ENCODE measurements at regions of chr9 and their contacts with region 1.

Region 1: GRCh38 chr9:128757602-128758001 is 14.1 kb downstream of the ZER1 start:
- DNase-seq: no peak
- ATAC-seq: no peak
- H3K4me3 ChIP-seq: no peak overlapping the region
- H3K27ac ChIP-seq: no peak overlapping the region
- H3K4me1 ChIP-seq: no peaks in the 10 kb centered on the region
- H3K27me3 ChIP-seq: no peaks in the 10 kb centered on the region
- CTCF ChIP-seq: no peak
- EP300 ChIP-seq: no peak
- POLR2A ChIP-seq: no peak
- RAD21 ChIP-seq: no peak

Region 2: GRCh38 chr9:128296337-128297220 is 461.0 kb before region 1 on chr9:
- CTCF ChIA-PET with region 1: no interaction called
- POLR2A ChIA-PET with region 1: no interaction called
- RAD21 ChIA-PET with region 1: no interaction called
- SMC1A ChIA-PET with region 1: no interaction called
- in situ Hi-C with region 1: no loop called
- intact Hi-C with region 1: no loop called
- DNase-seq: no peak
- ATAC-seq: no peak
- H3K4me3 ChIP-seq: no peak overlapping the region
- H3K27ac ChIP-seq: no peak overlapping the region
- H3K4me1 ChIP-seq: no peaks in the 10 kb centered on the region
- H3K27me3 ChIP-seq: no peaks in the 10 kb centered on the region
- CTCF ChIP-seq: no peak
- EP300 ChIP-seq: no peak
- POLR2A ChIP-seq: no peak
- RAD21 ChIP-seq: no peak

Region 3: GRCh38 chr9:128723866-128724743 is 33.5 kb before region 1 on chr9 and contains the start of gene ZDHHC12:
- CTCF ChIA-PET with region 1: no interaction called
- POLR2A ChIA-PET with region 1: no interaction called
- RAD21 ChIA-PET with region 1: no interaction called
- SMC1A ChIA-PET with region 1: no interaction called
- in situ Hi-C with region 1: no loop called
- intact Hi-C with region 1: no loop called
- DNase-seq: peak; percentile 92
- ATAC-seq: peak; percentile 99
- H3K4me3 ChIP-seq: peak within 1 kb of the TSS; percentile 100
- H3K27ac ChIP-seq: peak within 1 kb of the TSS; percentile 63
- H3K4me1 ChIP-seq: peaks cover 5% of the 10 kb centered on the region
- H3K27me3 ChIP-seq: no peaks in the 10 kb centered on the region
- CTCF ChIP-seq: no peak
- EP300 ChIP-seq: no peak
- POLR2A ChIP-seq: peak; percentile 99
- RAD21 ChIP-seq: no peak
- polyA plus RNA-seq, gene ZDHHC12: 0.95 to 9.9 TPM

Region 4: DNA sequence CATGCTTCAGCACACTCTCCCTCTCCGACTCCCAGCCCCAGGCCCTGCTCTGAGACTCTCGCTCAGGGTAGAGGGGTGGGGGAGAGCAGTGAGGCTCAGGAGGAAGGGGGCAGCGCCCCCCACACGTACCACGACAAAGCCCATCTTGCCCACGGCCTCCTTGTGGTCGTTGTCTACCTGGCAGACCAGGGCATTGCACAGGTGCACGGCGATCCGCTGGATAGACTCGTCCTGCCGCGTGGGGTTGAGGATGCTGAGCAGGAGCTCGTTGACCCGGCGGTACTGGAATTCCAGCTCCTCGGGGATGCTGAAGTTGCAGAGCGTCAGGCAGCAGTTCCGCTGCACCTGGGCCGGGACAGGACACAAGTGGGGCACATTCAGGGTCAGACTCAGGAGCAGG is 15.2 kb before region 1 on chr9:
- CTCF ChIA-PET with region 1: interaction called, 4 read pairs
- POLR2A ChIA-PET with region 1: interaction called, 10 read pairs
- RAD21 ChIA-PET with region 1: interaction called, 3 read pairs
- SMC1A ChIA-PET with region 1: no interaction called
- in situ Hi-C with region 1: no loop called
- intact Hi-C with region 1: no loop called
- DNase-seq: no peak
- ATAC-seq: no peak
- H3K4me3 ChIP-seq: no peak overlapping the region
- H3K27ac ChIP-seq: no peak overlapping the region
- H3K4me1 ChIP-seq: no peaks in the 10 kb centered on the region
- H3K27me3 ChIP-seq: no peaks in the 10 kb centered on the region
- CTCF ChIP-seq: no peak
- EP300 ChIP-seq: no peak
- POLR2A ChIP-seq: 0 out of 2 replicates have a peak, but pooled peaks have one; percentile 12
- RAD21 ChIP-seq: no peak

Region 5: GRCh38 chr9:128809832-128810231 is 52.2 kb after region 1 on chr9:
- CTCF ChIA-PET with region 1: no interaction called
- POLR2A ChIA-PET with region 1: no interaction called
- RAD21 ChIA-PET with region 1: no interaction called
- SMC1A ChIA-PET with region 1: no interaction called
- in situ Hi-C with region 1: no loop called
- intact Hi-C with region 1: no loop called
- DNase-seq: no peak
- ATAC-seq: no peak
- H3K4me3 ChIP-seq: no peak overlapping the region
- H3K27ac ChIP-seq: no peak overlapping the region
- H3K4me1 ChIP-seq: no peaks in the 10 kb centered on the region
- H3K27me3 ChIP-seq: no peaks in the 10 kb centered on the region
- CTCF ChIP-seq: 0 out of 6 replicates have a peak, but pooled peaks of 1 of the 3 experiments have one; percentile 6
- EP300 ChIP-seq: no peak
- POLR2A ChIP-seq: no peak
- RAD21 ChIP-seq: no peak